ENCODE measurements at regions of chr18 and their contacts with region 1.

Region 1: GRCh38 chr18:36296650-36297416 is 680 bp upstream of the FHOD3 start:
- DNase-seq: peak; percentile 91
- H3K4me3 ChIP-seq: peak overlapping the region; percentile 70 to 84 (median 80)
- H3K27ac ChIP-seq: peak overlapping the region; percentile 78 to 87 (median 82)
- H3K4me1 ChIP-seq: peaks cover 13 to 37% (median 27%) of the 10 kb centered on the region in 4 donors
- H3K27me3 ChIP-seq: peaks cover 0 to 10% (median 5%) of the 10 kb centered on the region in 4 donors
- CTCF ChIP-seq: peak; percentile 17 to 29 (median 22)
- EP300 ChIP-seq: no peak
- POLR2A ChIP-seq: no peak

Region 2: DNA sequence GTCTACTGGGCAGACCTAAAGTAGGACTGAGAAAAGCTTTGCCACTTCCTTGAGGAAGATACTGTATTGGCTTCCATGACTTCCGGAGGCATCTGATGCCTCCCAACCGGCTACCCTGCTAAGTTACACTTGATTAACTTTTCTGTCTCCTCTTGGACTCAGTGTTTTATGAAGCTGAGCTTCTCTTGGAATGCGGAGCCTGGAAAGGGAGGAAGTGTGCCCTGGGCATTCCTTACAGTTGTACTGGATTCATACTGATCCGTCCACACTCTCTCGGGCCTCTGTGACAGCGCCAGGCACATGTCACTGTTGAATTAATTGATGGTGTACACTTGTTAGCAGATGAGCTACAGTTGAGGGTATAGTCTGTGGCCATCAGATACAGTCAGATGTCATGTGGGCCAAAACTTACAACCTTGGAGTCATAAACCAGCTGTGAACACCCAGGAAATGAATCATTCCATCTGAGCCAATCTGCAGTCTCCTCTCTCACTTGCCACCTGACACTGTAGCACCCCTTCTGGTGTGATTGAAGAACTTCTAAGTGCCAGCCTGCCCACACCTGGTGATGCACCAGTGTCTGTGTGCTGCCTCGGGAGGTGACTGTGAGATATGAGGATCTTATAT is 123.2 kb after region 1 on chr18:
- intact Hi-C with region 1: loop called (anchors 10 kb)
- DNase-seq: no peak
- H3K4me3 ChIP-seq: no peak overlapping the region
- H3K27ac ChIP-seq: no peak overlapping the region
- H3K4me1 ChIP-seq: peaks cover 17 to 27% (median 22%) of the 10 kb centered on the region in 4 donors
- H3K27me3 ChIP-seq: no peaks in the 10 kb centered on the region
- CTCF ChIP-seq: no peak
- EP300 ChIP-seq: no peak
- POLR2A ChIP-seq: no peak

Region 3: DNA sequence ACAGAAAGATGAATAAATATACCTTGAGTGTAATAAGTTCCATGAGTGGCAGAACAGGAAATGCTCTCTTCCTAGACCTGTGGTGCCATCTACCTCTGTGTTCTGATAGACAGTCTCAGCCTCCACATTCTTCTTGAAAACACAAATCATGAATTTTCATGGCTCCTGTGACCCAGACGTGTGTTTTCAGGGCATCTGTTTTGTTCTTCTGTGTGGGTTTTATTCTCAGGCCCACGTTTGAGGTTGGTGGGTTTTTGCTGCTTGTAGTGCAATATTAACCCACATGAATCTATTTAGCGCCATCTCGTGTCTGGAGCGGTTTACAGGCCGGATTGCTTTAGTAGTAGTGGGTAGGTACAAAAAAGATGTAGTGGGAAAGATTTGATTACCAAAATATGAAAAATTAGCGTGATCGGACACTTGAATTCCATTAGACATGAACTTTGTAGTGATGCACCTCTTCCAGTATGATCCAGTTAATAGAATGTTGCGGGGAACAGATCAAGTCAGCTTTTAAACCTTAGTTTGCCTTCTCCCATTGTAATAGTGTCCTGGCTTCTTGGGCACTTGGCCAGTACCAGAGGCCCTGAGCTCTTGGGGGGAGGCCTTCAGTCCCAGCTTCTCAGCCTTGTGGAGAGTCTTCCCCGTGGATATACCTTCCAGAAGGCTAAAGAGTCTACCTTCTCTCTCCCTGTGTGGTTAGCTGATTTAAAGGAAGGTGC is 275.5 kb after region 1 on chr18:
- intact Hi-C with region 1: loop called (anchors 5 kb)
- DNase-seq: peak; percentile 92
- H3K4me3 ChIP-seq: no peak overlapping the region
- H3K27ac ChIP-seq: no peak overlapping the region
- H3K4me1 ChIP-seq: peaks cover 4 to 14% (median 7%) of the 10 kb centered on the region in 4 donors
- H3K27me3 ChIP-seq: no peaks in the 10 kb centered on the region
- CTCF ChIP-seq: peak; percentile 58 to 62 (median 59)
- EP300 ChIP-seq: no peak
- POLR2A ChIP-seq: no peak

Region 4: DNA sequence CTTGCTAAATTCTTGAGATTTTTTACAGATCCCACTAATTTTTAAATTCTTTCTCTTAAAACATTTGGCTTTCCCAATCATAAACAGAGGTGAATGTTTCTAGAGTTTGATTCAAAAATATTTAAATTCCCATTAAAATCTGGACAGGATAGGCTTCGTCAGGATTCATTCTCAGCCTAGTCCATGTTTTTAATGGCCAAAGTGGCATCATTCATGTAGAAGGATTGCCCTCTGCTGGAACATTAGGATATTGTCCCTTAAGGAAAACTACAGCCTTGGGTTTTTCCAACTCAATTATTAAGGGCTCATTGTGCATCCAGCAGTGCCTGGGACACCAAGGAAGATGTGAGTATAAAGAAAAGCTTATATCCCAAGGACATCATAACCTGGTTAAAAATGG is 460.2 kb after region 1 on chr18:
- intact Hi-C with region 1: loop called (anchors 5 kb)
- DNase-seq: no peak
- H3K4me3 ChIP-seq: no peak overlapping the region
- H3K27ac ChIP-seq: peak overlapping the region; percentile 28 to 67 (median 46)
- H3K4me1 ChIP-seq: peaks cover 3 to 39% (median 35%) of the 10 kb centered on the region in 4 donors
- H3K27me3 ChIP-seq: no peaks in the 10 kb centered on the region
- CTCF ChIP-seq: peak; percentile 70 to 75 (median 70)
- EP300 ChIP-seq: no peak
- POLR2A ChIP-seq: no peak

Region 5: DNA sequence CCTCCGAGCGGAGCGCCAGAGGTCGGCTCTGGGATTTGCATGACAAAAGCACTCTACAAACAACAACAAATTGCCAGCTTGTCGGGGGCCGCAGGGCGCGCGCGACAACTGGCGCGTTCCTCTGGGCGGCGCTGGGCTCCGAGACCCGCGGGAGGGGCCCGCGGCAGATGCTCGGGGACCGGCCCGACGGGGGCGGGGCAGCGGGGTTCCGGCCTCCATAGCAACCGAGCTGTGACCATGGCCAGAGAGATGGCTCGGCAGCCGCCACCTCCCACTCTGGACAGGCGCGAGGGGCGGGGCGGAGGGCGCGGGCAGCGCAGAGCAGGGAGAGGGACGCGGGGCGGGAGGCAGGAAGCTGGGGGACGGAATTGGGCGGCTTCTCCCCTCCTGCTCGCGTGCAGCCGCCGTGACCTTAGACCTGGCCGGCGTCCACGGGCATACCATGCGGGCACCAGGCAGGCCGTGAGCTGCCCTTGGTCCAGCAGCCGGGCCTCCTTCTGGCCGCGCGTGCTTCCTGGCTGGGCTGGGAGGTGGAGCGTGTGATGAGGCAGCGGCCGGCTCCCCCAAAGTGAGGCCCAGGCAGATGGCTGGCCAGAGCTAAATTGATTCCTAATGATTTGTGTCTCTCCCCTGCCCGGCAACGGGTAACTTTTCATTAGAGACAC is 1097.2 kb after region 1 on chr18:
- intact Hi-C with region 1: no loop called
- DNase-seq: no peak
- H3K4me3 ChIP-seq: peak overlapping the region; percentile 55 to 64 (median 56)
- H3K27ac ChIP-seq: peak overlapping the region in 1 of 4 donors; percentile 23
- H3K4me1 ChIP-seq: peaks cover 9 to 20% (median 17%) of the 10 kb centered on the region in 4 donors
- H3K27me3 ChIP-seq: no peaks in the 10 kb centered on the region
- CTCF ChIP-seq: no peak
- EP300 ChIP-seq: no peak
- POLR2A ChIP-seq: no peak